ENCODE measurements at regions of chr13 and their contacts with region 1.

Region 1: GRCh38 chr13:100721885-100722512 is 47.4 kb upstream of the TMTC4 start:
- DNase-seq: peak; percentile 75
- H3K4me3 Mint-ChIP-seq: no peak overlapping the region
- H3K27ac Mint-ChIP-seq: no peak overlapping the region
- H3K4me1 Mint-ChIP-seq: no peaks in the 10 kb centered on the region
- H3K27me3 Mint-ChIP-seq: peaks cover 6% of the 10 kb centered on the region

Region 2: DNA sequence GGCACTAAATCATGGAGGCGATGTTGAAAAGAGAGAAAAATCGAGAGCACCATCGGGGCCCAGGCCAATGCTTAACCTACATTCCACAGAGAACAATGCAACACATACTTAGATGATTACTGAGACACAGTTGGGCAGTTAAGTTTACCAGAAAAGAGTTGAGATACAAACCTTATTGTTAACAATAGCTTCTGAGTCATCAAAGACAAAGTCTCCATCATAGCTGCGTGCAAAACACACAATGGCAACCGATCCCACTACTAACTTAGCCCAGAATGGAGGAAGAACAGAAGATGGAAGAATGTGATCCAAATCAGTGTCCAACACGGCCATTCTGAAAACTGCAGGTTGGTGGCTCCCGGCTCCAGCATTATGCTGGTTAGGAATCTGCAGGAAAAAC is 53.6 kb before region 1 on chr13:
- CTCF ChIA-PET with region 1: no interaction called
- intact Hi-C with region 1: no loop called
- DNase-seq: no peak
- H3K4me3 Mint-ChIP-seq: no peak overlapping the region
- H3K27ac Mint-ChIP-seq: no peak overlapping the region
- H3K4me1 Mint-ChIP-seq: peaks cover 8% of the 10 kb centered on the region
- H3K27me3 Mint-ChIP-seq: no peaks in the 10 kb centered on the region

Region 3: DNA sequence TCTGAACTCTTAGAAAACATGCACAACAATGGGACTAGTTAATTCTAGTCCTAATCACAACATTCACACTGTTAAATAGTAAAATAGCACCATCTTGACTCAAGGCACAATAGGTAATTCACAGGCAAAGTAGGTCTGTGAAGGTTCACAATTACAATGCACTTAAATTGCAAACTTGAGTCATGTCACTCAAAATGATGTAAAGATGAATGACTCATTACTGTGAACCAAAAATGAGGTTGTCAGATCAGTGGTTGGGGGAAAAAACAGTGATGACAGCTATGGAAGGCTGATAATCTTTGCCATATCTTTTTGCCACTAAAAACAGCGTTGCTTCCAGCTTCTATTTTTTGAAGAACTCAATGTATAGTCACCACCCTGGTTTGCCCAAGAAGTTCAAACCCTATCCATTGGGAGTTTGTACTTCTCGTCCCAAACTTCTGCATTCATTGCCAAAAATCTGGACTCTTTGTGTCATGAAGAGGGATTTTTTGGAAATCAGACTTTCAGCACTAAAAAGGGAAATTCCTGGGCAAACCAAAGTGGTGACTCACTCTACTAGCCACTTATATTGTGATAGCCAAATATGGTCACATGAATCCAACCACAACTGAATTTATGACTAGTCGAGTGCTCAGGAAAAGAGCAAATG is 153.5 kb after region 1 on chr13:
- CTCF ChIA-PET with region 1: no interaction called
- intact Hi-C with region 1: loop called (anchors 5 kb)
- DNase-seq: peak; percentile 31
- H3K4me3 Mint-ChIP-seq: no peak overlapping the region
- H3K27ac Mint-ChIP-seq: peak overlapping the region; percentile 64
- H3K4me1 Mint-ChIP-seq: peaks cover 8% of the 10 kb centered on the region
- H3K27me3 Mint-ChIP-seq: peaks cover 57% of the 10 kb centered on the region

Region 4: DNA sequence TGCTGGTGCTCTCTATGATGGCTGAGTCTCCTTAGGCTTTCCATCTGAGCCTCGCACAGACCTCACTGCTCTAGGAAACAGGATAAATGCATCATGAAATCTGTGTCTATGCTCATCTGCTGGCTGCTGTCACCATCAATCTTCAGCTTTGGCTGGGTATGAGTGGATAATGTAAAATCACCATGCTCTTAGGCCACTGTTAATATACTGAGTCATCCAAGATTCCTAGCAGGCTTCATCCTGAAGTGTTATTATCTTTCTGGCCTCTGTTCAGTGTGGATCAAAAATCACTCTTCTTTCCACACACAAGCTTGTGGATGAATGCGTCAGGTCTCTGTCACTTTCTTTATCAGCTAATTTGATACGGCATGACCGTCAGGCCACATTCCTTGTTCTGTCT is 376.9 kb after region 1 on chr13:
- CTCF ChIA-PET with region 1: no interaction called
- intact Hi-C with region 1: loop called (anchors 1 kb)
- DNase-seq: no peak
- H3K4me3 Mint-ChIP-seq: no peak overlapping the region
- H3K27ac Mint-ChIP-seq: no peak overlapping the region
- H3K4me1 Mint-ChIP-seq: no peaks in the 10 kb centered on the region
- H3K27me3 Mint-ChIP-seq: peaks cover 2% of the 10 kb centered on the region

Measured in activated naive CD4-positive, alpha-beta T cell treated with anti-CD3 and anti-CD28 coated beads for 36 hours (primary cell).